Activated CD8-positive, alpha-beta T cell treated with anti-CD3 and anti-CD28 coated beads for 36 hours (primary cell): ENCODE measurements at regions of chr10 and their contacts with region 1.

Region 1: DNA sequence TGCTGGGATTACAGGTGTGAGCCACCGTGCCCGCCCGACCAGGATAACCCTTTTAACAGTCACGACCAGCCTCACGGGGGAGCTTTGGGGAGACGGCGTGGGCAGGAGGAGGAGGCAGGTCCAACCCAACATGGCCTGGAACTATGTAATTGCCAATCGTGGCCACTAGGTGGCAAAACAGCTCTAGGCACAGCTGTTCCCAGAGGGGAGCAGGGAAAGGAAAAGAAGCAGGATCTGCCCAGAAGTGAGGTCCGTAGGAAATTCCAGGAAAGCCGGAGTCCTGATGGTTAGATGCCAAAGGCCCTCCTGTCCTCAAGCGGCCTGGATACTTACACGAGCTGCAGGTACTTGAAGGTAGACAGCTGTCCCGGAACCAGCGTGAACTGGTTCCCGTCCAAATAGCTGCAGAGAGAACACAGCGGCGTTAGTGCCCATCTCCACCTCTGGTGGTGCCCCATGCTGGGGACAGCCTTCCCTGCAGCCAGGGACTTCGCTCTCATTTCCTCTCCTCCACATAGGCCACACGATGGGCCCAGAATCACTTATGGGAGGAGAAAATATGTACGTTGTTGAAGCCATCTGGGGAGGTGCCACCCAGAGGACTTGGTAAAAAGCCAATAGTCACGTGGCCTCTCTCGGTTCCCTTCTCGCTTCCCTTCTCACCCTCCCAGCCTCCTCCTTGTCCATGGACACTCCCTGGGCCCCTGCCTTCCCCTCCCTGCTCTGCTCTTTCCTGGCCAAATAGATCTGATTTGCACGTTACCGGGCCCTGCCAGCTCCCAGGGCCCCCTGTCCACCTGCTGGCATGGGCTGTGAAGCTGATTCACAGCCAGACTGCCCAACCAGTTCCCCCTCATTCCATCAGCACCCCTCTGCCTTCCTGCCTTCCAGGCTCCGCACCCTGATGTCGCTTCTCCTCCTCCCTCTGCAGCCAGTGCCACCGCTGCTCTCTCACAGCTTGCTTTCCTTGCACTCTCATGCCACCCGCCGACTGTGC is 148.1 kb downstream of the SLIT1 start:
- DNase-seq: peak; percentile 85
- ATAC-seq: peak; percentile 98
- H3K4me3 Mint-ChIP-seq: peak overlapping the region; percentile 46
- H3K27ac Mint-ChIP-seq: no peak overlapping the region
- H3K4me1 Mint-ChIP-seq: peaks cover 9% of the 10 kb centered on the region
- H3K27me3 Mint-ChIP-seq: peaks cover 8% of the 10 kb centered on the region
- CTCF ChIP-seq: peak; percentile 97

Region 2: DNA sequence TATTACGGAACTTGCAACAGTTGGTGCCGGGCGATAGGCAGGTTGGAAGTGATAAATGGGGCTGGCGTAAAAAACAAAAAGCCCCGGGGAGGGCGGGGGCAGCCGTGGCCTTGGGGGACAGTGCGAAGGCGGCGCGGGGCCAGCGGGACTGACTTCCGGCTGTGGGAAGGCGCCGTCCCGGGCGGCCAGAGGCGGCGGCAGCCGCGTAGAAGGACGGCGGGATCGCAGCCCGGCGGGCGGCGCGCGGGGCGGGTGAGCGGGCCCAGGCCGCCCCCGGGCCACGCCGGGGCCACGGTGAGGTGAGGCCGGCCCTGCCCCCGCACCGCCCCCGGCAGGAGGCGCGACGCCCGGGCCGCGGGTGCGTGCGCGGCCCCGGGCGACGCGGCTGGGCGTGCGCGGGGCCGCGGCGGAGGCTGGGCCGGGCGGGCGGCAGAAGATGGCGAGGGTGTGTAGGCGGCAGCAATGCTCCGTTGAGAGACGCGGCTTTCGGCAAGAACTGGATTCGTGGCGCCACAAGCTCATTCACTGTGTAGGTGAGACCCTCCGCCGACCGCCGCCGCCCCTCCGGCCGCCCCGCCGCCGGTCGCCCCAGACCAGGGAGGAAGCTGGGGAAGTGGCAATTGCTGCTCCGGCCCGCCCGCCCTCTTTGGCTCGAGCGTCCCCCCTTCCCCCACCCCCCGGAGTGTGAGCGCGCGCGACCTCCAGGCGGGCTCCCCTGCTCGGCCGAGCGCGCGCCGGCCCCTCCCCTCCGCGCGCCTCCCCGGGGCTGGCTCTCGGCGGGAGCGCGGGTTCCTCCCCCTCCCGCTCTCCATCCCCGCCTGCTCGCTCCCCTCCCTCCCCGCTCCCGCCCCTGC is 205.6 kb before region 1 on chr10 and contains the start of gene LCOR:
- CTCF ChIA-PET with region 1: no interaction called
- POLR2A ChIA-PET with region 1: no interaction called
- intact Hi-C with region 1: loop called (anchors 10 kb)
- DNase-seq: peak; percentile 91
- ATAC-seq: peak; percentile 74
- H3K4me3 Mint-ChIP-seq: peak within 1 kb of the TSS; percentile 97
- H3K27ac Mint-ChIP-seq: peak within 1 kb of the TSS; percentile 97
- H3K4me1 Mint-ChIP-seq: peaks cover 49% of the 10 kb centered on the region
- H3K27me3 Mint-ChIP-seq: no peaks in the 10 kb centered on the region
- CTCF ChIP-seq: no peak
- total RNA-seq, gene LCOR: 20.6 to 24.3 TPM

Region 3: DNA sequence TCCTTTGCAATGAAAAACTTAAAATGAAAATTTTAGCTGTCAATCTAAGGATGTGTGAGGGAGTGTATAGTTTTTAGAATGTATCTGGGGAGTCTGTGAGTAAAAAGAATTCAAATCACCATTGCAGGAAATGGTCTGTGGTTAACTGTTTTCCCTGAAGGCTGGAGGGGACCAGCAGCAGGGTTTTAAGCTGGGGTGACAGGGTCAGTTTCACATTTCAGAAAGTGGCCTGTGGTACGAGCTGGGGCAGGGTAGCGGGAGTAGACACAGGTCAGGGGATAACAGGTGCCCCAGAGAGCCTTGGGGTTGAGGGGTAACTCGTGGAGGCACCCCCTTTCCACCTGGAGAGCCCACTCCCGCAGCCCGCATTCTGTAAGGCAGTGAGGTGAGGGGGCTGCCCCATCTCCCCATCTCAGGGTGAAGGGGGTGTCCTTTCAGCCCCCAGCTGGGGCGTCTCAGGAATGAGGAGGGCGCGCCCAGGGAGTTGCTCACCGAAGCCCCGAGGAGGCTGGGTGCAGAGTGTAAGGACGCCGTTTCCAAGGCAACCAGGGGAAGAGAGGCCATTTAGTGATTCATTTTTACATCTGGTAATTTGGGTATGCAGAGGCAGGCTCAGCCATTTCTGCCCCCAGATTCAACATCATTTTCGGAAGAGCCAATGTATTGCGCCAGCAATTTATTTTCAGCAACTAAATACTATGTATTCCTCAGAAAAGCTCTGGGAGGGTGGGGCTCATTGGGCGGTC is 20.8 kb before region 1 on chr10:
- CTCF ChIA-PET with region 1: interaction called, 12 read pairs
- POLR2A ChIA-PET with region 1: no interaction called
- intact Hi-C with region 1: no loop called
- DNase-seq: peak; percentile 88
- ATAC-seq: peak; percentile 81
- H3K4me3 Mint-ChIP-seq: peak overlapping the region; percentile 59
- H3K27ac Mint-ChIP-seq: peak overlapping the region; percentile 81
- H3K4me1 Mint-ChIP-seq: peaks cover 11% of the 10 kb centered on the region
- H3K27me3 Mint-ChIP-seq: no peaks in the 10 kb centered on the region
- CTCF ChIP-seq: no peak

Region 4: GRCh38 chr10:97048649-97049427 is 11.2 kb after region 1 on chr10:
- CTCF ChIA-PET with region 1: interaction called, 22 read pairs
- POLR2A ChIA-PET with region 1: no interaction called
- intact Hi-C with region 1: no loop called
- DNase-seq: no peak
- ATAC-seq: no peak
- H3K4me3 Mint-ChIP-seq: no peak overlapping the region
- H3K27ac Mint-ChIP-seq: no peak overlapping the region
- H3K4me1 Mint-ChIP-seq: peaks cover 8% of the 10 kb centered on the region
- H3K27me3 Mint-ChIP-seq: peaks cover 3% of the 10 kb centered on the region
- CTCF ChIP-seq: no peak

Region 5: GRCh38 chr10:97196223-97197029 is 158.8 kb after region 1 on chr10:
- CTCF ChIA-PET with region 1: interaction called, 34 read pairs
- POLR2A ChIA-PET with region 1: no interaction called
- intact Hi-C with region 1: no loop called
- DNase-seq: peak; percentile 81
- ATAC-seq: peak; percentile 91
- H3K4me3 Mint-ChIP-seq: peak overlapping the region; percentile 70
- H3K27ac Mint-ChIP-seq: no peak overlapping the region
- H3K4me1 Mint-ChIP-seq: peaks cover 13% of the 10 kb centered on the region
- H3K27me3 Mint-ChIP-seq: peaks cover 24% of the 10 kb centered on the region
- CTCF ChIP-seq: peak; percentile 84

Region 6: DNA sequence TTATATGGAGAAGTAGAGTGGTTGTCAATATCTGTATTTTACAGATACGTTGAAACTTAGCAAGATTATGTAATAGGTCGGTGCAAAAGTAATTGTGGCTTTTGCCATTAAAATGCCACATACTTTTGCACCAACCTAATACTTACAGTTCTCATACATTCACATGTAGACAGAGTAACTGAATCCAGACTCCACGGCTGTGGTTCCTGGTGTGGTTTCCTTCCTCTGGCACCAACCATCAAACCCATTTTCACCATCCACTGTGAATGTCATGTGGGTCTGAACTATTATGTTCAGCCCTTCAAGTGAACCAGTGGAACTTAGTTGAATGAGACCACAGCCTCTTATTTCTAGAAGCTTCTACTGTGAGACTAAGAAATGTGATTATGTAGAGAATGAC is 179.6 kb after region 1 on chr10:
- CTCF ChIA-PET with region 1: interaction called, 55 read pairs
- POLR2A ChIA-PET with region 1: no interaction called
- intact Hi-C with region 1: no loop called
- DNase-seq: no peak
- ATAC-seq: no peak
- H3K4me3 Mint-ChIP-seq: no peak overlapping the region
- H3K27ac Mint-ChIP-seq: peak overlapping the region; percentile 94
- H3K4me1 Mint-ChIP-seq: peaks cover 29% of the 10 kb centered on the region
- H3K27me3 Mint-ChIP-seq: no peaks in the 10 kb centered on the region
- CTCF ChIP-seq: no peak

Region 7: DNA sequence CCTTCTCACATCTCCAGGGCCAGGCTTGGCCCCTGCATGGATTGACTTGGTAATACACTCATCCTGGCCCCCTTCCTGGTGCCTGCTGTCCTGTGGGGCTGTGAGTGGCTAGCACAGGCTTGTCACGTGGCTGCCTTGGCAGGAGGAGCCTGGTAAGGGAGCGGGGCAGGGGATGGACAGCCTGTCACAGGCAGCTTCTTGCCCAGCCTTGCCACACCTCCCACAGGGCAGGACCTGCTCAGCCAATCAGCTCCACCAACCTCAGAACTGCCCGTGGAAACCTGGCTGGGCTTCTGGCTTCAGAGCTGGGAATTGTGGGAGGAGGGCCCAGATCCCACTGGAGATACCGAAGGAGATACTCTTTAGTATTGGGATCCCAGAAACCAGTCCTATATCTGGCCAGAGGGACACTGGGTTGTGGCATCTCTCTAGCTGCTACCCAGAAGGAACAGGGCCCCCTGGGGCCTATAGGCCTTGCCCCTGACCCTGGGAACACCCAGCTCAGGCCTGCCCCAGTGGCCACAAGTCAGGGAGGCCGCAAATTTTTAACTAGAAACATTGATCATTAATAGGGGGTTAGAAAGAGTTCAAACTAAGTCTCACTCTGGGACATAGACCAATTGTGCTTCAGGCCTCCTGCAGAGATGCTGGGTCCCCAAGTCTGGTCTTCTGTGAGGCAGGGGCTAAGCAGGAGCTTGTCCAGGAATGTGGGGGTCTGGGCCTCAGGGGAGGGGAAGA is 546.6 kb after region 1 on chr10 and contains the start of gene HOGA1:
- CTCF ChIA-PET with region 1: no interaction called
- POLR2A ChIA-PET with region 1: no interaction called
- intact Hi-C with region 1: no loop called
- DNase-seq: no peak
- ATAC-seq: no peak
- H3K4me3 Mint-ChIP-seq: no peak within 1 kb of the TSS
- H3K27ac Mint-ChIP-seq: no peak within 1 kb of the TSS
- H3K4me1 Mint-ChIP-seq: no peaks in the 10 kb centered on the region
- H3K27me3 Mint-ChIP-seq: no peaks in the 10 kb centered on the region
- CTCF ChIP-seq: no peak
- total RNA-seq, gene HOGA1: not detected